ENCODE measurements at regions of chr10 and their contacts with region 1.

Region 1: DNA sequence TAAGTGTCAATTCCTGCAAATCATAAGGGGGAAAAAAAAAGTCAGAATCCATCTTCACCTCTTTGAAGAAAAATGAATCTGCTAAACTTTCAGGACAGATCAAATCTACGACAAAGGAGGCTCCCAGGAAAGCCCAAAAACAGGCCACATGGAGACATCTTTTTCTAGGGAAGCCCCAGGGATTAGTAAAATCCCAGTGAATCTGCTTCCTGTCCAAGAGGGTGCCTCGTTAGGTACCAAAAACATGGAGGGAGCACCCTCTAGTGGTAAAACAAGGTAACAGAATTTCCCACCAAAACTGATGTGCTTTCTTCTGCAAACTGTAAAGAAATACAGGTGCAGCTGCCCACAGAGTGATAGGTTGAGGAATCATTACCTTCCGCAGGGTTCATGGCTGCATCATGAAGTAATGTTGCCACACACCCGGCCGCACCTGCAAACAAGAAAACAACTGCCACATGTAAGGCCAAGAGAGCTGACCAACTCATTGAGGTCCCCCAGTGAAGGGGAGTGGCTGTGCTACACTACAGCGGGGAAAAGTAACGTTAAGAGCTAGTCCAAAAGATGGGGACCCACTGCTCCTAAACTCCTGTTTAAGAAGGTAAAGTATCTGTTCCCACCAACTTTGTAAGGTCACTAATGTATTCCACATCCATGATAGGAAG is 7.9 kb downstream of the SLC25A28 start:
- DNase-seq: peak; percentile 55
- ATAC-seq: peak; percentile 59
- H3K4me3 Mint-ChIP-seq: no peak overlapping the region
- H3K27ac Mint-ChIP-seq: peak overlapping the region; percentile 31
- H3K4me1 Mint-ChIP-seq: peaks cover 34% of the 10 kb centered on the region
- H3K27me3 Mint-ChIP-seq: no peaks in the 10 kb centered on the region

Region 2: DNA sequence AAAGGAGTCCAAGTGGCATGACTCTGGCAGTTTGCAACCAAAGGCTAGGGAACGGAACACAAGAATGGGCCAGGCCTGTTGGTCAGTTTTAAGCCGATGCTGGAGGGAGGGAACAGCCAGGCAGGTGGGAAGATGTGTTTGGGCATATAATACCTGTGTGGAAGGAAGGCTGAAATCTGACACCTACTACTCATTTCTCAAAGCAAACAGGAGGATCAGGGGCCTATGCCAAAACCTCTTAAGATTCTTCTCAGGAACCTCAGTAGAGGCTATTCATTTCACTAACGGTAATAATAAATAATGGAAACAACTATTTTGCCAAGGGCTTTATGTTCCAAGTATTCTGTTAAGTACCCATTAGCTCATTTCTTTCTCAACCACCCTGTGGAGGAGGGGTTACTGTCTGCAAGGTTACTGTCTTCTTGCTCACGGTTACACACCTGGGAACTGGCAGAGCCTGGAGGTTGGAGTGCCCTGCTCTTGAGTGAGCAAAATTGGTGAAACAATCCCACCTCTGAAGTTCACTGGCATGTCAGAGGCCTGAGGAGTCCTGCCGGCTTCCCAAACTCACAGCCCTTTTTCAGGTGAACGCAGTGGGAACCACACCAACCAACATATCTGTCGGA is 217.4 kb before region 1 on chr10:
- CTCF ChIA-PET with region 1: interaction called, 15 read pairs
- POLR2A ChIA-PET with region 1: no interaction called
- DNase-seq: no peak
- ATAC-seq: no peak
- H3K4me3 Mint-ChIP-seq: no peak overlapping the region
- H3K27ac Mint-ChIP-seq: no peak overlapping the region
- H3K4me1 Mint-ChIP-seq: peaks cover 12% of the 10 kb centered on the region
- H3K27me3 Mint-ChIP-seq: peaks cover 2% of the 10 kb centered on the region

Region 3: DNA sequence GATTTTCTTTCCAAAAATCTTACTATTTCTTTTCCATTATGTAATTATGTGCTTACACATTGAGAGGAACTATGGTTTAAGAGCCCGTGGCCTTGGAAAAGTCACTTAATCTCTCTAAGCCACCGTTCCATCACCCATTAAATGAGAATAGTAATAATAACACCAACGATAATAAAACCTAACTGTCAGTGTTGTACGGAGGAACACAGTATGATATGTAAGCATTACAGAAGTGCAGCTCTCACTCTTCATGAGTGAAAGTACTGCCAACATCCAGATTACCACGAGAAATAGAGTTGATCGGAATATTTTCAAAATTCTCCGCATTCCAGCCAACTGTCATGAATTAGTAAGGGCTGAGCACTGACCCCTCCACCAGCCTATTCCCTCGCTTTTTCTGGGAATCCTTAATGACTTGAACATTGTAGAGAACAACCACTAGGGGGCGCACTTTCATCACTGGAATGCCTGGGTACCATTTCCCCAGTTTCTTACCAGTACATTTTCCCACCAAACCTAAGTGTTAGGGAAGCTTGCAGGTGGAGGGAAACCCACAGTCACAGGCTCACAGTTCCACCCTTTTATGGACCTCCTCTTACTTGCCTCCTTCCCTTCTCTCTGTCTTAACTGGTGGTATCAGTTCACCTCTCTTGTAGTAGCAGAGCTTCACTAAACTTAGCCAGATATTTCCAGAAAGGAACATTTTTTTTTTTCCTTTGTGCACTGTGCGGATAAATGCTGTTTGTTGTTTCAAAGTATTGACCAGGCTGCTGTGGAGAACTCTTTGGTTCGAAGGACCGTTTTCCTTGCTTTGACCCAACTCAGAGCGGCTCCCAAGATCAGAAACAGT is 51.8 kb before region 1 on chr10:
- CTCF ChIA-PET with region 1: interaction called, 20 read pairs
- POLR2A ChIA-PET with region 1: no interaction called
- DNase-seq: peak; percentile 66
- ATAC-seq: no peak
- H3K4me3 Mint-ChIP-seq: no peak overlapping the region
- H3K27ac Mint-ChIP-seq: no peak overlapping the region
- H3K4me1 Mint-ChIP-seq: peaks cover 9% of the 10 kb centered on the region
- H3K27me3 Mint-ChIP-seq: peaks cover 26% of the 10 kb centered on the region

Region 4: DNA sequence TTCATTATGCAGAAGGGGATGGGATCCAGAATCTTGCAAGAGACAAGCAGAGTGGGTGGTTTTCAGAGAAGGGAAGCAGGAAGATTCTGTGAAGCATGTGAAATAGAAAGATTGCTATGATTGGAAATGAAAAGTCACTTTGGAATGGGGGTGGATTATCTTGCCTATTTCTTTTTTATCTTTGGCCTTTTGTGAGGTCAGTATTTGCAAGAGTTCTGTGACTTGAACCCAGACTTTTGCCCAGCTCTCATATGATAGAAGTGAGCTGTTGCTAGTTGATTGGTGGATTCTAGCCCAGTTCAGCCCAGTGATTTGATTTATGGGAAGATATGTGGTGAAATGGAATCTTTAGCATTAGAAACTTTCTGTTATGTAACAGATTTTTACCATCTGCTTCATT is 64.1 kb after region 1 on chr10:
- CTCF ChIA-PET with region 1: no interaction called
- POLR2A ChIA-PET with region 1: no interaction called
- DNase-seq: no peak
- ATAC-seq: no peak
- H3K4me3 Mint-ChIP-seq: no peak overlapping the region
- H3K27ac Mint-ChIP-seq: no peak overlapping the region
- H3K4me1 Mint-ChIP-seq: peaks cover 12% of the 10 kb centered on the region
- H3K27me3 Mint-ChIP-seq: no peaks in the 10 kb centered on the region

Measured in activated CD8-positive, alpha-beta T cell treated with anti-CD3 and anti-CD28 coated beads, Interleukin-2, amount 10 ng/mL, durations not matched to agents 7 days and 5 days (primary cell).